ENCODE measurements at regions of chr1 and their contacts with region 1.

Region 1: GRCh38 chr1:158819461-158820443 is 11.4 kb upstream of the MNDA start:
- DNase-seq: no peak
- H3K4me3 Mint-ChIP-seq: peak overlapping the region; percentile 47
- H3K27ac Mint-ChIP-seq: peak overlapping the region; percentile 79
- H3K4me1 Mint-ChIP-seq: peaks cover 31% of the 10 kb centered on the region
- H3K27me3 Mint-ChIP-seq: peaks cover 6% of the 10 kb centered on the region

Region 2: DNA sequence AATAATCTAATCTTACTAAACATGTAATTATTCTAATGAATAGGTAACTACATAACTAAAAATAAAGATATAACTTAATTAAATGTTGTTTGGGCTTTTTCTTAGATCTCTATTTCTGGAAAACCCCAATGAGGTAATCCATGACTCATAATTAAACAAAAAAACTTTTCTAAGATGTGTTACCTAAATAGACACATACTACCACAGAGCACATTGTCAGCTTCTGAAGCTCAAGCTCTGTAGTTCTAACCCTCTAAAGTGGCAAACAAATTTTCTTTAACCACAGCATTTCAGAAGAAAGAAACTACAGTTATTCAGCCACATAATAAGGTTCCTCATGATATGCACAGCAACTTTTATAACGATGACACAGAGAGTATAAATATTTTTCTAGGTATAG is 103.4 kb before region 1 on chr1:
- intact Hi-C with region 1: loop called (anchors 2 kb)
- DNase-seq: no peak
- H3K4me3 Mint-ChIP-seq: no peak overlapping the region
- H3K27ac Mint-ChIP-seq: peak overlapping the region; percentile 56
- H3K4me1 Mint-ChIP-seq: no peaks in the 10 kb centered on the region
- H3K27me3 Mint-ChIP-seq: peaks cover 8% of the 10 kb centered on the region

Region 3: DNA sequence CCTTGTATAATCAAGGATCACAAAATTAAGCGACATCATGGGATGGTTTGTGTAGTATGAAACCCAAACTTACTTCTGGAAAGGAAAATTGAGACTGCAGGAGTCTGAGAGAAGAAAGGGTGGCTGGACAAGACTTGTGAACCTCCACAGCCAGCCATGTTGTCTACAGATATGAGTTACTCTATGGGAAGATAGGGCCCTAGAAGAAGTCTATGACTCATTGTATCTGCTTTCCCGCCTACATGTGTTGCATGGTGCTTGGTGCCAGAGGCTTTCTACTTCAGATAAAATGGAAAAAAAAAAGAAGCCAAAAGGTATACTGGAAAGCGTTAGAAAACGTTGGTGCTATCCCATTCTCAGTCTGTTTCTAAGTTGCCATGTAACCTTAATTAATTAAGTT is 20.1 kb before region 1 on chr1:
- intact Hi-C with region 1: loop called (anchors 1 kb)
- DNase-seq: no peak
- H3K4me3 Mint-ChIP-seq: no peak overlapping the region
- H3K27ac Mint-ChIP-seq: no peak overlapping the region
- H3K4me1 Mint-ChIP-seq: peaks cover 13% of the 10 kb centered on the region
- H3K27me3 Mint-ChIP-seq: peaks cover 19% of the 10 kb centered on the region

Region 4: DNA sequence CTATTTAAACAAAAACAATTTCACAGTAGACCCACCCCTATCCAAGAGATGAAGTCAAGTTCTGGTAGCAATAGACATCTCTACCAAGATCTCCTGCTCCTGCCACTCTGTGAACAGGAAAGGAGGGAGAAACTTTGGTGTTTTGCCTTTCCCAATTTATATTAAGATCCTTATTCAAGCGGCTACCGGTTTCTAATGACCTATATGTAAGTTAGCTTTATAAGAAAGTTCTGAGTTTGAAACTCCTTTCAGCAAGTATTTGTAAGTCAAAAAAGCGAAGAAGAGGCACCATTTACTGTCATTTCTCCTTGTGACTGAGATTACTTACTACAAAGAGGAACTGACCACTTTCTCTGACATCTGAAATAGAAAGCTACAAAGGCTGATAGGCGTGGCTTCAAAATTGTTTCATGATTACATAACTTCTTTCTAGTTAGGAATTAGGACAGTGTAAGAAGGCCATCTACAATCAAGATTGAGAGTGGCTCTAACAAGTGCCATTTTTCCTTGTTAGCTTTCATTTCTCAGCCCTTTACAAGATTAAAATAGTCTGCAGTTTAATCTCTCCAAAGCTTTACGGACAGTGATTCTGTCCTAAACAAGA is 11.3 kb after region 1 on chr1 and contains the start of gene MNDA:
- intact Hi-C with region 1: loop called (anchors 1 kb)
- DNase-seq: no peak
- H3K4me3 Mint-ChIP-seq: no peak within 1 kb of the TSS
- H3K27ac Mint-ChIP-seq: peak within 1 kb of the TSS; percentile 50
- H3K4me1 Mint-ChIP-seq: peaks cover 14% of the 10 kb centered on the region
- H3K27me3 Mint-ChIP-seq: peaks cover 3% of the 10 kb centered on the region
- total RNA-seq, gene MNDA: not detected in 2 replicates

Region 5: DNA sequence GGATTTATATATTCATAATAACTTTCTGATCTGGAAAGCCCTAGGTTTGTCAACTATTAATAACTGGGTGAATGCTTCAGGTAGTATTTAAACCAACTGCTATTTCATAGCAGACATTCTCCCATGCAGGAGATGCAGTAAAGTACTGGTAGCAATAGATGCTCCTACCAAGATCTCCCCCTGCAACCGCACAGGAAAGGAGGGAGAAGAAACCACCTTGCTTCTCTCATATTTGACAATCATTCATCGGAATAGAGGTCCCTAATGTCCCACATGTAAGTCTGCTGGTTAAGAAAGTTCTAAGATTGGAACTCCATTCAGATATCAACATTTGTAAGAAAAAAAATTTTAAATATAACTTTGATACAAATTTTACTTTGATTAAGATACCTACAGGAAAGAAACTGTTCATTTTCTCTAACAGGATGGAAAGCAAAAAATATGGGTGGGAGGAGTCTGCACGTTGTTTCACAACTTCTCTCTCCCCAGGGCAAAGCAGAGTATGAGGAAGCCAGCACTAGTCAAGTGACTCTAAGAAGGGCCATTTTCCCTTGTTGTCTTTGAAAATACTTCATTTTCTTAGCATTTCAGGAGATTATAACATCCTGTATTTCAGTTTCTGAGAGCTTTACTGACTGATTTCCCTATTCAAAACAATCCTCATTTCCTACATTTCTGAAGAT is 111.4 kb after region 1 on chr1 and contains the start of gene PYHIN1:
- intact Hi-C with region 1: loop called (anchors 5 kb)
- DNase-seq: peak; percentile 18
- H3K4me3 Mint-ChIP-seq: peak within 1 kb of the TSS; percentile 91
- H3K27ac Mint-ChIP-seq: peak within 1 kb of the TSS; percentile 91
- H3K4me1 Mint-ChIP-seq: peaks cover 48% of the 10 kb centered on the region
- H3K27me3 Mint-ChIP-seq: peaks cover 5% of the 10 kb centered on the region
- total RNA-seq, gene PYHIN1: 19.5 and 19.9 TPM in 2 replicates

Region 6: DNA sequence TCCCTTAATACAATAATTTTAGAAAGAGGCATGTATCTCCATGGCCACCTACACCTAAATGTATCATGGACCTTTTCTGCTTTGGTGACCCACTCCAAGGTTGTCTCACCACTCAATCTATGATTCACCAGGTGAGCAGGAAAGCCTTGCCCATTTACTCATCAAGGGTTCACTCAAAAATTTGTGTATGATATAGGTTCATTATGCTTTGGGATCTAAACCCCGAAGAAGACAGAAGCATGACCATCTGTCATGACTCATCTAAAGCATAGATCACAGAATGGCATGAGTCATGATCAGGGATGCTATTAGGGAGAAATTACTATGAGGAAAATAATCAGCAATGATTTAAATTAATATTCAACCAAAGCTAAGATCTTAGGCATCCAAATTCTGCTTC is 150.1 kb after region 1 on chr1:
- intact Hi-C with region 1: loop called (anchors 1 kb)
- DNase-seq: no peak
- H3K4me3 Mint-ChIP-seq: no peak overlapping the region
- H3K27ac Mint-ChIP-seq: peak overlapping the region; percentile 56
- H3K4me1 Mint-ChIP-seq: peaks cover 13% of the 10 kb centered on the region
- H3K27me3 Mint-ChIP-seq: peaks cover 3% of the 10 kb centered on the region